ENCODE measurements at regions of chr1 and their contacts with region 1.

Region 1: GRCh38 chr1:156383023-156383422 is 14.0 kb downstream of the RHBG start:
- DNase-seq: no peak
- H3K4me3 ChIP-seq: no peak overlapping the region
- H3K27me3 ChIP-seq: peaks cover 12% of the 10 kb centered on the region
- CTCF ChIP-seq: peak; percentile 93

Region 2: GRCh38 chr1:156282479-156283222 is 100.4 kb before region 1 on chr1 and contains the start of gene SMG5:
- CTCF ChIA-PET with region 1: no interaction called
- POLR2A ChIA-PET with region 1: no interaction called
- DNase-seq: peak; percentile 87
- H3K4me3 ChIP-seq: peak within 1 kb of the TSS; percentile 90
- H3K27me3 ChIP-seq: no peaks in the 10 kb centered on the region
- CTCF ChIP-seq: no peak
- polyA plus RNA-seq, gene SMG5: 22.8 and 32.6 TPM in 2 replicates

Region 3: GRCh38 chr1:156356875-156357534 is 26.0 kb before region 1 on chr1:
- CTCF ChIA-PET with region 1: interaction called, 16 read pairs
- POLR2A ChIA-PET with region 1: no interaction called
- DNase-seq: no peak
- H3K4me3 ChIP-seq: no peak overlapping the region
- H3K27me3 ChIP-seq: peaks cover 19% of the 10 kb centered on the region
- CTCF ChIP-seq: peak; percentile 98

Region 4: DNA sequence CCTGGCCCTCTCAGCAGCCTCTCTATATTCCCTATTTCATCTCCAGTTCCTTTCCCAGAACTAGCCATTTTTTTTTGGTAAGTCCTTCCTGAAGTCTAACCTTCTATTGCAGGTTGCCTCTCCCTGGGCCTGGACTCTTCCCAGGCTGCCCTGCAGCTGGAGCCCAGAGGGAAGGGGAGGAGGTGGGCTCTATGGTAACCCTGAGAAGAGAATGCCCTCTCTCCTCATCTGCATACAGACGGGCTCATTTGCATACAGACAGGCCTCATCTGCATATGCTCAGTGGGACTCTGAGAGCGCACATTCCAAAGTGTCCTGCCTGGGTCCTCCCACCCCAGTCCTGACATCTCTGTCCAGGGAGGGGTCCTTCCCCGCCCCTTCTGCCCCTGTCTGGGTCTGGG is 18.7 kb after region 1 on chr1:
- CTCF ChIA-PET with region 1: interaction called, 39 read pairs
- POLR2A ChIA-PET with region 1: no interaction called
- DNase-seq: no peak
- H3K4me3 ChIP-seq: no peak overlapping the region
- H3K27me3 ChIP-seq: peaks cover 39% of the 10 kb centered on the region
- CTCF ChIP-seq: no peak

Region 5: DNA sequence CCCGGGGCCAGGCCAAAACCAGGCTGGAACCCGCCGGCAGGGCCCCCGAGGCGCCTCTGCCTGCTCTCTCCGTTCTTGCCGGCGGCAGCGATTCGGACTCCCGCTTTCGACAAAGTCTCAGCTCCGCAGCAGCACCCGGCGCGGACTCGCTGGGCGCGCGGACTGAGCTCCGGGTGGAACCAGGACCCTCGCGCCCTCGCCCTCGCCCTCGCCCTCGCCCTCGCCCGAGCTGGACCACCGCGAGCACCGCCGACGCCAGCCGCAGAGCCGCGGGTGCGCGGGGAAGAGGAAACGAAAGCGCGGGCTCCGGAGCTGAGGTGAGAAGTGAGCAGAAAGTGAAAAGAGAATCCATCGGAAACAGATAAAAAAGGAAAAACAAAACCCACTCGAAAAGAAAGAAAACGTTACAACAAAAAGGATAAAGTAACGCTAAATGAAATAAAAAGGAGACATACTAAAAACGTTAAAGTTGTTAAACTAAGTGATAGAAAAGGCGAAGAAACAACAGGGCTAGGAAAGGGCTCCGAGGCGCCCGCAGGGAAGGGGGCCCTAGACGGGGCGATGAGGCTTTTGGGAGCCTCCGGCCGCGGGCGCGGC is 52.6 kb after region 1 on chr1:
- CTCF ChIA-PET with region 1: interaction called, 96 read pairs
- POLR2A ChIA-PET with region 1: no interaction called
- DNase-seq: no peak
- H3K4me3 ChIP-seq: no peak overlapping the region; the same call in 1 of the 2 replicates
- H3K27me3 ChIP-seq: peaks cover 82% of the 10 kb centered on the region
- CTCF ChIP-seq: no peak

Region 6: GRCh38 chr1:156461781-156462647 is 79.0 kb after region 1 on chr1:
- CTCF ChIA-PET with region 1: interaction called, 10 read pairs
- POLR2A ChIA-PET with region 1: no interaction called
- DNase-seq: no peak
- H3K4me3 ChIP-seq: no peak overlapping the region
- H3K27me3 ChIP-seq: no peaks in the 10 kb centered on the region
- CTCF ChIP-seq: no peak

Region 7: GRCh38 chr1:156480411-156481192 is 97.6 kb after region 1 on chr1:
- CTCF ChIA-PET with region 1: no interaction called
- POLR2A ChIA-PET with region 1: no interaction called
- DNase-seq: no peak
- H3K4me3 ChIP-seq: no peak overlapping the region
- H3K27me3 ChIP-seq: no peaks in the 10 kb centered on the region
- CTCF ChIP-seq: peak; percentile 81

Region 8: GRCh38 chr1:156625436-156626078 is 242.5 kb after region 1 on chr1:
- CTCF ChIA-PET with region 1: interaction called, 18 read pairs
- POLR2A ChIA-PET with region 1: no interaction called
- DNase-seq: no peak
- H3K4me3 ChIP-seq: no peak overlapping the region
- H3K27me3 ChIP-seq: peaks cover 29% of the 10 kb centered on the region
- CTCF ChIP-seq: peak; percentile 90

Region 9: DNA sequence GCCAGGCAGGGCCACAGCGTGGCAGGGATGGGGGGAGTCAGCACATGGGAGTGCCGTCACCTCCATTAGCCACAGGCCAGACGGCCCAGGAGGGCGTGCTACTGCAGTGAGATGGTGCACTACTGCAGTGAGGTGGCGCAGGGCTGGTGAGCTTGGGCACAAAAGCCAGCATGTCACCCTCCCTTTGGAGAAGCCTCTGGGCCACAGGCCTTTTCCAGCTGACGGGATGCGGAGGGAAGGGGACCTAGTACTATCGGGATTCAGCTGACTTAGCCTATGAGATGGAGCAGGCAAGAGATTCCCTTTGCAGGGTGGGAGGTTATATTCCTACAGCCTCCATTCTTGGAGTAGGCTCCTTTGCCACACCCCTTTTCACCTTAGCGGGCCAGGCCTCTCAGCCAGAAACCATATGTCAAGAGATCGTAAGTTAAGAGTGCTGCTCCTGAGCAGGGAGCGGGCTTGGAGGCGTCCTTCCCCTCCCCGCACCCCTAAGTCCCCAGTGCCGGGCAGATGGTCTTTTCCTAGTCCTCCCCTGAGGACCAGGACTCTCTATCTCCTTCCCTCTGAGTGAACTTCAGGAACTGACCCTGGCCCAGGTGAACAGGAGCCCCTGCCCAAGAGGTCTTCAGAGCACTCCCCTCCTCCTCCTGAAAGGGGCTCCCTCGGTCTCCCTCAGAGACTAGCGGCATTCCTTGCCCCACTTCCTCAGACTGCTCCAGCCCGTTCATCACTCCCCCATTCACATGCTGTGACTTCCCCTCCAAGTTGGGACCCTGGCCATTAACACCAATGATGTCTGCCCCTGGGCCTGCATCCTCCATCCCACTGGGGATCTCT is 286.0 kb after region 1 on chr1:
- CTCF ChIA-PET with region 1: no interaction called
- POLR2A ChIA-PET with region 1: no interaction called
- DNase-seq: no peak
- H3K4me3 ChIP-seq: no peak overlapping the region
- H3K27me3 ChIP-seq: no peaks in the 10 kb centered on the region
- CTCF ChIP-seq: no peak